H1 (cell line): ENCODE measurements at regions of chr11 and their contacts with region 1.

Region 1: DNA sequence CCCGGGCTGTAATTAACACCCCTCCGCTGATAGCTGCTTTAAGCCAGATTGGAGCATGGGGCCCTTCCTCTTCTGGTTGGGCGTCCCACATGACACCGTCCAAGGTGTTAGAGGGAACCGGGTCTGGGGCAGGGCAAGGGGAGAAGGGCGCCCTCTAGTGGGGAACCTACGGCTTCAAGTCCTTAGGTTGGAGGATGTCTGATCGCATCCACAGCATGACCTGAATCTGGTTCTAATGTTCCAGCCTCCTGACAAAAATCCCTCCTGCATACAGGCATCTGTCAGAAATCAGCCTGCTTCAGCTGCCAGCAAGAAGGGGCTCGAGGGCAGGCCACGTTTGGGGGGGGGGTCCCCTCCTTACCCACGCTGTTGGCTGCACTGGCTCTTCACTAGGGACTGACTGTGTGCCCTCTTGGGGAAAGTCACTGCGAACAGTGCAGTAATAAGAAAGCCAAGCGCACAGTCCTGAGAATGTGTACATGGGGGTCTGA is 94.2 kb upstream of the TBCEL start:
- DNase-seq: peak; percentile 73 to 88
- H3K4me3 ChIP-seq: no peak overlapping the region
- H3K27ac ChIP-seq: no peak overlapping the region
- H3K4me1 ChIP-seq: peaks cover 0 to 8% (median 0%) of the 10 kb centered on the region in 4 experiments; a peak in 3 of 7 replicates
- H3K27me3 ChIP-seq: peaks cover 0 to 3% (median 0%) of the 10 kb centered on the region in 4 experiments; a peak in 1 of 7 replicates
- CTCF ChIP-seq: peak; percentile 92 to 93 (median 93)
- EP300 ChIP-seq: no peak
- POLR2A ChIP-seq: no peak
- RAD21 ChIP-seq: peak; percentile 86 to 90

Region 2: GRCh38 chr11:120817158-120817557 is 112.6 kb before region 1 on chr11:
- CTCF ChIA-PET with region 1: interaction called, 12 read pairs
- POLR2A ChIA-PET with region 1: no interaction called
- DNase-seq: no peak
- H3K4me3 ChIP-seq: no peak overlapping the region
- H3K27ac ChIP-seq: no peak overlapping the region
- H3K4me1 ChIP-seq: no peaks in the 10 kb centered on the region
- H3K27me3 ChIP-seq: no peaks in the 10 kb centered on the region
- CTCF ChIP-seq: no peak
- EP300 ChIP-seq: no peak
- POLR2A ChIP-seq: no peak
- RAD21 ChIP-seq: no peak